HepG2 (cell line): ENCODE measurements at regions of chr13 and their contacts with region 1.

Region 1: DNA sequence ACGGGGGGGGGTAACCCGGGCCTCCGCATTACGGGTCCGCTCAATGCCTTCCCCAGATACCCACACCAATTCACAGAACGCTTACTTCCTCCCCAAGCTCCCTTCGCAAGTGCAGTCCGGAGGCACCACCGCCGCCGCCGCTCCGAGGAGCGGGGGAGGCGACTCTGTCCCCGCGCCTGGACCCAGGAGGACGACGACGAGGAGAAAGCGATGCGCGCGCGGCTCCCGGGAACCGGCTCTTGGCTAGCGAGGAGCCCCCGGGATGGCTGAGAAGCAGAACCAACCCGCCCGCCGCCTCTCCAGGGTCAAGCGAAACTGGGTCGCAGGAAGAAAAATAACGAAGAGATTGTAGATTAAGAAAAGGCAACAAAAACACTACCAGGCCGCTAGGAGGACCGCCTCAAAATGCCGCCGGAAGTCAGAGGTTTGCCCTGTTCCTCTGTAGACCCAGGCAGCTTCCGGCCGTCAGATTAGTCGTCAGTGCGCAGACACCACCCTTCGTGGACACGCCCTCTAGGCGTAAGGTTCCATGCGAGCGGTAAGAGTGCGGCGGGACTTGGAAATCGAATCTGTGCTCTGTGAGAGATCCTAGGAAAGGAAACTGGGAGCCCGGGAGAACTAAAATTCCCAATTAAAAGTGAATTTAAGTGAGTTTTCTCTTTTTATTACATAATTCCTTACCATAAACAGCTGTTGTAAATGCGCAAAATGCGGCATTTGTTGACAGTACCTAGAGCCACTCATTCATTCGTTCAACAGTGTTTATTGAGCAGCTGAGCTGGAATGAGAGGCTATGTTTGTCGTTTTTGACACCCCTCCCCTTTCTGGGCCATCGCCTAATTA is at the start of gene ZC3H13:
- DNase-seq: peak; percentile 94
- ATAC-seq: peak; percentile 100
- H3K4me3 ChIP-seq: peak within 1 kb of the TSS; percentile 84 to 99 (median 87)
- H3K27ac ChIP-seq: peak within 1 kb of the TSS; percentile 87
- H3K4me1 ChIP-seq: peaks cover 31% of the 10 kb centered on the region
- H3K27me3 ChIP-seq: no peaks in the 10 kb centered on the region; a peak in 1 of 5 replicates
- CTCF ChIP-seq: peak; percentile 48
- EP300 ChIP-seq: no peak
- POLR2A ChIP-seq: peak; percentile 81 to 83
- RAD21 ChIP-seq: no peak
- total RNA-seq, gene ZC3H13: 23.5 and 30.4 TPM in 2 replicates

Region 2: DNA sequence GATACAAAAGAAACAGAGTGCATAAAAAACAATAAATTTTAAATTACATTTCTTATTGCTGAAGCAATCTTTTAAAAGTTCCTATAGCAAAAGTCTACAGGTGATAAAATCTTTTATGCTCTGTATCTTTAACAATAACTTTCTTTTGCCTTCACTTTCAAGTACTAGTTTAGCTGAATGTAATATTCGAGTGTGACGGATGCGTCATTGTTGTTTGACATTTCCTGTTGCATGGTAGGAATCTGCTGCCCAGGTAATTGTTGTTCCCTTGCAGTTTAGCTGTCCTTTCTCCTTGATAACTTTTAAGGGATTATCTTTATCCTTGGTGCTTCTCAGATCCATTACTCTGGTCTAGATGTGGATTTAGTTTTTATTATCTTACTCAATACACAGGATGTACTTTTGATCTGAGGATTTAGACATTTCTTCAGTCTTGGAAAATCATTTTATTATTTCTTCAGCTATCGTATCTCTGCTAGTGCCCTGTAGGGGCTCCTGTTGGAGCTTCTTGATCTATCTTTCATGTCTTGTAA is 54.4 kb after region 1 on chr13:
- CTCF ChIA-PET with region 1: no interaction called
- POLR2A ChIA-PET with region 1: interaction called, 4 read pairs
- in situ Hi-C with region 1: no loop called
- intact Hi-C with region 1: loop called (anchors 5 kb)
- DNase-seq: no peak
- ATAC-seq: no peak
- H3K4me3 ChIP-seq: no peak overlapping the region
- H3K27ac ChIP-seq: peak overlapping the region; percentile 29
- H3K4me1 ChIP-seq: peaks cover 87% of the 10 kb centered on the region
- H3K27me3 ChIP-seq: no peaks in the 10 kb centered on the region
- CTCF ChIP-seq: no peak
- EP300 ChIP-seq: no peak
- POLR2A ChIP-seq: no peak
- RAD21 ChIP-seq: no peak

Region 3: GRCh38 chr13:46197300-46198048 is 144.9 kb after region 1 on chr13:
- CTCF ChIA-PET with region 1: no interaction called
- POLR2A ChIA-PET with region 1: no interaction called
- in situ Hi-C with region 1: no loop called
- intact Hi-C with region 1: no loop called
- DNase-seq: no peak
- ATAC-seq: no peak
- H3K4me3 ChIP-seq: no peak overlapping the region
- H3K27ac ChIP-seq: no peak overlapping the region
- H3K4me1 ChIP-seq: no peaks in the 10 kb centered on the region
- H3K27me3 ChIP-seq: no peaks in the 10 kb centered on the region
- CTCF ChIP-seq: no peak
- EP300 ChIP-seq: no peak
- POLR2A ChIP-seq: no peak
- RAD21 ChIP-seq: no peak